ENCODE measurements at regions of chr10 and their contacts with region 1.

Region 1: DNA sequence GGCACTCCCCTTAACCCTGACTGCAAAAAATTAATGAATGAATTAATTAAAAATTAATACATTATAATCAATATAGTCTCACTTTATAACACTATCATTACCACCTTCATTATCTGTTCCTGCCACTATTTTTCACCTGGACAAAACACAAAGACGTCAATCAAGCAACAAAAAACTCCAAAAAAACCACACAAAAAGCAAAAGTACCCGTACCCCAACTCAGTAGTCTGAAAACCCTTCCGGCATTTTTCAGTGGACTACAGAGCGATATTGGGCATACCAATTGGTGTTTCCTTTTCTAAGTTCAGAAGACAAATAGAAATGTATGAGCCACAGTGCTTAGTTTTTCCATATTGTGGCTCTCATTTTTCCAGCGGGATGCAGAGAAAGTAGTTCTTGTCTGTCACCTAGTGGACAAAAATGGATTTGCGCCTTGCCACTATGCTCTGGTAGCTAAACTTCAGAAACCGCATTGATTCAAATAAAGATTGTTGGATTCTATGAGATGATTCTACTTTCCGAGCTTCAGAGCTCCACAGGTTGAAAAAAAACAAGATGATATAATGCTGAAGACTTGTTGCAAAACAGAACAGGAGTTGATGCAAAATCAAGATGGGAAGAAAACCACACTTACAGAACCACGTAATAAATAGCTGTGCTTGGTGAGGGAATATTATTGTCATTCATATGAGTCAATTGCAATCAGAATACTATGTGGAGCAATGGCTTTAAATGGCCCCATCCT is 50.6 kb upstream of the ITGB1 start:
- DNase-seq: no peak
- ATAC-seq: peak; percentile 72
- H3K4me3 ChIP-seq: no peak overlapping the region
- H3K27ac ChIP-seq: no peak overlapping the region
- H3K4me1 ChIP-seq: peaks cover 0 to 1% of the 10 kb centered on the region in 2 donors
- H3K27me3 ChIP-seq: no peaks in the 10 kb centered on the region

Region 2: GRCh38 chr10:32417911-32418547 is 590.6 kb before region 1 on chr10:
- intact Hi-C with region 1: no loop called
- DNase-seq: no peak
- ATAC-seq: no peak
- H3K4me3 ChIP-seq: no peak overlapping the region
- H3K27ac ChIP-seq: peak overlapping the region; percentile 33 to 57
- H3K4me1 ChIP-seq: peaks cover 0 to 1% of the 10 kb centered on the region in 2 donors
- H3K27me3 ChIP-seq: no peaks in the 10 kb centered on the region

Region 3: GRCh38 chr10:32795598-32796183 is 213.0 kb before region 1 on chr10:
- intact Hi-C with region 1: loop called (anchors 1 kb)
- DNase-seq: no peak
- ATAC-seq: no peak
- H3K4me3 ChIP-seq: no peak overlapping the region
- H3K27ac ChIP-seq: no peak overlapping the region
- H3K4me1 ChIP-seq: no peaks in the 10 kb centered on the region
- H3K27me3 ChIP-seq: no peaks in the 10 kb centered on the region

Region 4: DNA sequence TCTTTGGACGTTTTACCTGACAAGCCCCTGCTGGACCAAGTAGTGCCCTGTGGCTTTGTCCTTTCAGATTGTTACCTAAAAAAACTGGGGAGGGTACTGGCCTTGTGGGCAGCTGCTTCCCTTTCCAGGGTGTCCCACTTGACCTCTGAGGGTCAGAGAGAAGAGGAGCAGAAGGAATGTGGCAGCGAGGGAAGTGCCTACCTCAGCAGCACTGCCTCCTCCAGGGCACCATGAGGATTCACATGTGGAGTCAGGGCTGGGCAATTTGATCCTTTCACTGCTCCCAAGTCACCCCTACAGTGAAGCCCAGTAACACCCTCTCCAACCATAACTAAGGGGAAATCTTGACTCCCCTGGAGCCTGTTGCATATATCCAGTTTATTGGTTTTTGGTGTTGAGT is 115.2 kb before region 1 on chr10:
- intact Hi-C with region 1: loop called in 1 of 2 experiments (anchors 5 kb)
- DNase-seq: no peak
- ATAC-seq: no peak
- H3K4me3 ChIP-seq: no peak overlapping the region
- H3K27ac ChIP-seq: no peak overlapping the region
- H3K4me1 ChIP-seq: no peaks in the 10 kb centered on the region
- H3K27me3 ChIP-seq: no peaks in the 10 kb centered on the region

Region 5: DNA sequence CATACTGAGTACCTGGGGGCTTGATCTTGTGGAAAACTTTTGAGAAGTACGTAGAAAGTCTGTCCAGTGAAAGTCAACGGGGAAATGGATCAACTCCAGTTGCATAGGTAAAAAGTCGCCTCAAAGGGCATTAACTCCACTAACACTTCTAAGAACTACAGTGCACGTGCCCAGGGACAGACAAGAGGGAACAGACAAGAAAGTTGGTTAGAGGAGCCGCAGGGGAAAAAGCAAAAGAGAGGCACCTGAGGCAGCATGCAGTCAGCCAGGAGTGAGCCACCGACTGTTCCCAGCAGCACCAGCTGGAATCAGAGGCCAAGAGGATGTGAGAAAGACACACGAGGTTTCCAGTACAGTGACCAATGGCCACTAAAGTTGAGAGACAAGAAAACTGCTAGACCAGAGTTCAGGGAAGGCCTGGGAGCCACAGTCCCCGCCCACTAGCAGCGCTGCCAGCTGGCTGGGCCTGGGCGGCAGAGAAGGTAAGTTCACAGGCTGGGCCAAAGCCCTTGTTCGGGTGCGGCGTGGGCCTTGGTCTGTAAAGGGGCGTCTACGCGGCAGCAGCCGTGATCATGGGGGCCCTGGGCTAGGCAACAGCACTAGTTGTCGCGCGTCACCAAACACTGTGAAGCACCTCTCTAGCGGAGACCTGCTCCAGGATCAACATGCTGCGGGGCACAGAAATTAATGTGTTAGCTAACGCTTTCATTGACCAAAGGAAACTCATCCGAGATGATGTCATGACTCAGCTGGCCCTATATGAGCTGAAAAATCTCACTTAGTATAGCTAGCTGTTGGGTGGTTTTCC is 64.6 kb before region 1 on chr10:
- intact Hi-C with region 1: loop called in 1 of 2 experiments (anchors 5 kb)
- DNase-seq: peak; percentile 49 to 79
- ATAC-seq: peak; percentile 54
- H3K4me3 ChIP-seq: no peak overlapping the region
- H3K27ac ChIP-seq: peak overlapping the region in 1 of 2 donors; percentile 16
- H3K4me1 ChIP-seq: peaks cover 16 to 27% of the 10 kb centered on the region in 2 donors
- H3K27me3 ChIP-seq: no peaks in the 10 kb centered on the region

Region 6: GRCh38 chr10:32958085-32959005 is 50.3 kb before region 1 on chr10 and contains the start of gene ITGB1:
- intact Hi-C with region 1: loop called (anchors 1 to 2 kb)
- DNase-seq: peak; percentile 98 to 99
- ATAC-seq: peak; percentile 97
- H3K4me3 ChIP-seq: peak within 1 kb of the TSS; percentile 90 to 97
- H3K27ac ChIP-seq: peak within 1 kb of the TSS; percentile 88 to 96
- H3K4me1 ChIP-seq: peaks cover 0 to 9% of the 10 kb centered on the region in 2 donors
- H3K27me3 ChIP-seq: no peaks in the 10 kb centered on the region
- total RNA-seq, gene ITGB1: 870 to 1,426 TPM

Region 7: GRCh38 chr10:32980558-32981468 is 27.9 kb before region 1 on chr10:
- intact Hi-C with region 1: loop called (anchors 1 to 2 kb)
- DNase-seq: peak; percentile 96 to 97
- ATAC-seq: peak; percentile 94
- H3K4me3 ChIP-seq: peak overlapping the region; percentile 32 to 51
- H3K27ac ChIP-seq: peak overlapping the region; percentile 72 to 100
- H3K4me1 ChIP-seq: no peaks in the 10 kb centered on the region
- H3K27me3 ChIP-seq: no peaks in the 10 kb centered on the region